ENCODE measurements at regions of chr2 and their contacts with region 1.

Region 1: GRCh38 chr2:240832205-240832727 is 12.2 kb upstream of the KIF1A start:
- DNase-seq: peak; percentile 98
- ATAC-seq: peak; percentile 96
- H3K4me3 Mint-ChIP-seq: peak overlapping the region; percentile 63
- H3K27ac Mint-ChIP-seq: no peak overlapping the region
- H3K4me1 Mint-ChIP-seq: peaks cover 2% of the 10 kb centered on the region
- H3K27me3 Mint-ChIP-seq: peaks cover 19% of the 10 kb centered on the region

Region 2: DNA sequence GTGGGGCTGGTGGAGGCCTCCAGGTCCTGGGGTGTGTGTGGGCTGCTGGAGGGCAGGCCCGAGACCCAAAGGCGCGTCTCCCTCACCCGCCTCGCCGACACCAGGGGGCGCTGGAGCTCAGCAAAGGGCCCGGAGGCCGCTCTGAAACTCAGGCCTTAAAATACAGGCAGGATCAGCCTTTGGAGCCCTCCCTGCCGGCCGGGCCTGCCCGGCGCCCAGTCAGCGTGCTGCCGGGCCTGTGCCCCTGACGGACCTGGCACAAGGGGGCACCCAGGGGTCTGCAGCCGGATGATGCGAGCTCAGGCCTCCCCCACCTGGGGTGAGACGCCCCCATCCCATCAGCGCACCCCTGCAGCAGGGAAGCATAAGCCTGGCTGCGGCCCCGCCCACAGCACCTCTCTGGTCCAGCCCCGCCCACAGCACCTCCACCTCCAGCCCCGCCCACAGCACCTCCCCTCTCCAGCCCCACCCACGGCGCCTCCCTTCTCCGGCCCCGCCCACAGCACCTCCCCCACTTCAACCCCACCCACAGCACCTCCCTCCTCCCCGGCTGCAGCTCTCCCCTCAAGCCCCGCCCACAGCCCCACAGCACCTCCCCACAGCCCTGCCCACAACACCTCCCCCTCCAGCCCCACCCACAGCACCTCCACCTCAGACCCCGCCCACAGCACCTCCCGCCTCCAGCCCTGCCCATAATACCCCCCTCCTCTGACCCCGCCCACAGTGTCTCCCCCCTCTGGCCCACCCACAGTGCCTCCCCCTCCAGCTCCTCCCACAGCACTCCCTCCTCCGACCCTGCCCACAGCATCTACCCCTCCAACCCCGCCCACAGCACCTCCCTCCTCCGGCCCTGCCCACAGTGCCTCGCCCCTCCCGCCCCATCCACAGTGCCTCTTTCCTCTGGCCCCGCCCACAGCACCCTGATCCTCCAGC is 599.0 kb before region 1 on chr2:
- CTCF ChIA-PET with region 1: no interaction called
- POLR2A ChIA-PET with region 1: no interaction called
- intact Hi-C with region 1: loop called in 1 of 2 experiments (anchors 1 kb)
- DNase-seq: peak; percentile 88
- ATAC-seq: peak; percentile 70
- H3K4me3 Mint-ChIP-seq: no peak overlapping the region
- H3K27ac Mint-ChIP-seq: no peak overlapping the region
- H3K4me1 Mint-ChIP-seq: no peaks in the 10 kb centered on the region
- H3K27me3 Mint-ChIP-seq: peaks cover 11% of the 10 kb centered on the region

Region 3: GRCh38 chr2:240624950-240625621 is 207.2 kb before region 1 on chr2 and contains the start of gene GPR35:
- CTCF ChIA-PET with region 1: no interaction called
- POLR2A ChIA-PET with region 1: interaction called, 5 read pairs
- intact Hi-C with region 1: loop called in 1 of 2 experiments (anchors 1 kb)
- DNase-seq: peak; percentile 87
- ATAC-seq: peak; percentile 53
- H3K4me3 Mint-ChIP-seq: peak within 1 kb of the TSS; percentile 43
- H3K27ac Mint-ChIP-seq: peak within 1 kb of the TSS; percentile 84
- H3K4me1 Mint-ChIP-seq: peaks cover 52% of the 10 kb centered on the region
- H3K27me3 Mint-ChIP-seq: no peaks in the 10 kb centered on the region
- total RNA-seq, gene GPR35: 3.6 to 4.1 TPM

Region 4: DNA sequence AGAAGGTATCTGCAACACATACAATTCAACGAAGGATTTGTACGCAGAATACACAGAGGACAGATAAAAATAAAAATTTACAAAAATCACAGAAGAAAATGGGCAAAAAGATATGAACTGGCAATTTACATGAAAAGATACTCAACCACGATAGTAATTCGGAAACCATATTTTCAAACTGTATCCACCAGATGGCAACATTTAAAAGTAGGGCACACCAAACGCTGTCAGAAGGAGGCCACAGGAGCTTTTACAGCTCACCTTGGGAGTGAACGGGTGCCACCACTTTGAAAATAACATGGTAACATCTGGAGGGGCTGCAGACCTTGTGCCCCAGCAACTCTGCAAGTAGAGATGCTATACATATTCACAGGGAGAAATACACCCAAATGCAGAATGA is 22.1 kb before region 1 on chr2:
- CTCF ChIA-PET with region 1: no interaction called
- POLR2A ChIA-PET with region 1: no interaction called
- intact Hi-C with region 1: no loop called
- DNase-seq: no peak
- ATAC-seq: no peak
- H3K4me3 Mint-ChIP-seq: no peak overlapping the region
- H3K27ac Mint-ChIP-seq: no peak overlapping the region
- H3K4me1 Mint-ChIP-seq: no peaks in the 10 kb centered on the region
- H3K27me3 Mint-ChIP-seq: peaks cover 2% of the 10 kb centered on the region

Region 5: DNA sequence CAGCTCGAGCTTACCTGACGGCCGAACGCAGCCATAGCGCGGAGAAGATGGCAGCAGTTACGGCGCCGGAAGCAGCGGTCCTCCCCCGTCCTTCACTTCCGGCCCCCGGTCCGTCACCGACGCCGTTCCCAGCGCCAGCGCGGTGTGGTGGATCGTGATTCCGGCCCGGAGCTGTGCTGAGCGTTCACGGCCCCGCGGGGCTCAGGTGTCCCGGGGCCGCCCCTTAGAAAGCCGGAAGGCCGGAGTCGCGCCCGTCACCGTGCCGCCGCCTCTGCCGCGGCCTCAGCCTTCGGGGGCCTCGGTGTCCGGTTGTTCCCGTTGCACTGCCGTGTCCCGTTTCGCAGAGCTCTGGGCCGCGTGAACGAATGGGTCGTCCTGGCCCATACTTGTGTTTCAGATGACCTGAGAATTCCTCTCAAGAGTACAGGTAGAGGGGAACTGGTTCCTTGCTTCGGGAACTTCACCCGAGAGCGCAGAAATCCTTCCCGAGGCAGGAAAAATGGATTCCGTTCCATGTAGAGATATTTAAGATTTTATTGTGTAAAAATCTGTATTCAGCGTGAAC is 270.1 kb after region 1 on chr2 and contains the start of gene MTERF4:
- CTCF ChIA-PET with region 1: no interaction called
- POLR2A ChIA-PET with region 1: no interaction called
- intact Hi-C with region 1: loop called in 1 of 2 experiments (anchors 1 kb)
- DNase-seq: peak; percentile 94
- ATAC-seq: peak; percentile 97
- H3K4me3 Mint-ChIP-seq: peak within 1 kb of the TSS; percentile 98
- H3K27ac Mint-ChIP-seq: peak within 1 kb of the TSS; percentile 99
- H3K4me1 Mint-ChIP-seq: peaks cover 48% of the 10 kb centered on the region
- H3K27me3 Mint-ChIP-seq: no peaks in the 10 kb centered on the region
- total RNA-seq, gene MTERF4: 34.4 to 34.5 TPM

Region 6: GRCh38 chr2:241637000-241637791 is 804.9 kb after region 1 on chr2 and contains the starts of genes ATG4B and THAP4:
- CTCF ChIA-PET with region 1: no interaction called
- POLR2A ChIA-PET with region 1: no interaction called
- intact Hi-C with region 1: loop called in 1 of 2 experiments (anchors 2 kb)
- DNase-seq: peak; percentile 90
- ATAC-seq: peak; percentile 69
- H3K4me3 Mint-ChIP-seq: peak within 1 kb of the TSS; percentile 84
- H3K27ac Mint-ChIP-seq: peak within 1 kb of the TSS; percentile 96
- H3K4me1 Mint-ChIP-seq: peaks cover 50% of the 10 kb centered on the region
- H3K27me3 Mint-ChIP-seq: no peaks in the 10 kb centered on the region
- total RNA-seq, gene ATG4B: 71.8 to 80.1 TPM
- total RNA-seq, gene THAP4: 42.5 to 54.1 TPM

Measured in activated CD4-positive, alpha-beta T cell treated with anti-CD3 and anti-CD28 coated beads for 36 hours (primary cell).